ENCODE measurements at regions of chr16 and their contacts with region 1.

Region 1: GRCh38 chr16:85055503-85056210 is 28.1 kb downstream of the KIAA0513 start:
- DNase-seq: peak; percentile 75 to 93
- ATAC-seq: peak; percentile 86 to 97 (median 94)
- H3K4me3 ChIP-seq: peak overlapping the region; percentile 6
- H3K4me3 Mint-ChIP-seq: peak overlapping the region; percentile 78
- H3K27ac ChIP-seq: peak overlapping the region; percentile 85
- H3K27ac Mint-ChIP-seq: peak overlapping the region; percentile 90 to 91
- H3K4me1 ChIP-seq: peaks cover 36% of the 10 kb centered on the region
- H3K4me1 Mint-ChIP-seq: peaks cover 32% of the 10 kb centered on the region in 2 donors
- H3K27me3 ChIP-seq: no peaks in the 10 kb centered on the region
- H3K27me3 Mint-ChIP-seq: peaks cover 2 to 18% of the 10 kb centered on the region in 2 donors
- CTCF ChIP-seq: no peak

Region 2: DNA sequence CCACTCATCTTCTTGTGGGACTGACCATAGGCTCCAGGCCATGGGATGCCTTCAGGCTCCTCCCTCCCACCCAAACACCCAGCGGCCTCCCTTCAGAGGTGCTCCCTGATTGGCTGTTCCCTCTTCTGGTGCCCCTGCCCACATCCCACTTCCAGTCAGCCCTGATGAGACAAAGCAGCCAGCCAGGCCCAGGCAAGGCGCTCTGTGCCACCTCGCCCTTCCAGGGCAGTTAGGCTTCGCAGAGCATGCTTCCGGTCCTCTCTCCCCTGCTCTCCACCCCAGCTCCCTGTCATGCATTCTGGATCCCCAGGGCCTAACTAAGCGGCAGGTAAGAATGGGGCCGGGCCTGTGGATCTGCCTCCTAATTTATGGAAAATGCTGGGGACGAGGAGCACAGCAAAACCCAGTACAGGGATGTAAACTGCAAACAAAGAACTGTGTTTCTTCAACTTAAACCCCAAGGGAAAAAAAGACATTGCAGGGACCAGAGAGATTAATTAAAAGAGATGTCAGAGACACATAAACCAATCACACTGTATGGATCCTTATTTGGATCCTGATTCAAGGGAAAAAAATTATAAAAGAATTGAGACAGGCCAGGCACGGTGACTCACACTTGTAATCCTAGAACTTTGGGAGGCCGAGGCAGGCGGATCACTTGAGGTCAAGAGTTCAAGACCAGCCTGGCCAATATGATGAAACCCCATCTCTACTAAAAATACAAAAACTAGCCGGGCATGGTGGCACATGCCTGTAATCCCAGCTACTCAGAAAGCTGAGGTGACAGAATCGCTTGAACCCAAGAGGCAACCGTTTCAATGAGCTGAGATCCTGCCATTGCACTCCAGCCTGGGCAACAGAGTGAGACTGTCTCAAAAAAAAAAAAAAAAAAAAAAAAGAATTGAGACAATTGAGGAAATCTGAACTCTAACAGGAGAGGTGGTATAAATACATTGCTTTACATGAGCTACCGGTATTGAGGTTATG is 70.3 kb before region 1 on chr16:
- intact Hi-C with region 1: no loop called
- DNase-seq: no peak
- ATAC-seq: no peak
- H3K4me3 ChIP-seq: no peak overlapping the region
- H3K4me3 Mint-ChIP-seq: no peak overlapping the region
- H3K27ac ChIP-seq: no peak overlapping the region
- H3K27ac Mint-ChIP-seq: peak overlapping the region in 1 of 2 donors; percentile 13
- H3K4me1 ChIP-seq: peaks cover 15% of the 10 kb centered on the region
- H3K4me1 Mint-ChIP-seq: peaks cover 8 to 16% of the 10 kb centered on the region in 2 donors
- H3K27me3 ChIP-seq: no peaks in the 10 kb centered on the region
- H3K27me3 Mint-ChIP-seq: no peaks in the 10 kb centered on the region
- CTCF ChIP-seq: no peak

Region 3: DNA sequence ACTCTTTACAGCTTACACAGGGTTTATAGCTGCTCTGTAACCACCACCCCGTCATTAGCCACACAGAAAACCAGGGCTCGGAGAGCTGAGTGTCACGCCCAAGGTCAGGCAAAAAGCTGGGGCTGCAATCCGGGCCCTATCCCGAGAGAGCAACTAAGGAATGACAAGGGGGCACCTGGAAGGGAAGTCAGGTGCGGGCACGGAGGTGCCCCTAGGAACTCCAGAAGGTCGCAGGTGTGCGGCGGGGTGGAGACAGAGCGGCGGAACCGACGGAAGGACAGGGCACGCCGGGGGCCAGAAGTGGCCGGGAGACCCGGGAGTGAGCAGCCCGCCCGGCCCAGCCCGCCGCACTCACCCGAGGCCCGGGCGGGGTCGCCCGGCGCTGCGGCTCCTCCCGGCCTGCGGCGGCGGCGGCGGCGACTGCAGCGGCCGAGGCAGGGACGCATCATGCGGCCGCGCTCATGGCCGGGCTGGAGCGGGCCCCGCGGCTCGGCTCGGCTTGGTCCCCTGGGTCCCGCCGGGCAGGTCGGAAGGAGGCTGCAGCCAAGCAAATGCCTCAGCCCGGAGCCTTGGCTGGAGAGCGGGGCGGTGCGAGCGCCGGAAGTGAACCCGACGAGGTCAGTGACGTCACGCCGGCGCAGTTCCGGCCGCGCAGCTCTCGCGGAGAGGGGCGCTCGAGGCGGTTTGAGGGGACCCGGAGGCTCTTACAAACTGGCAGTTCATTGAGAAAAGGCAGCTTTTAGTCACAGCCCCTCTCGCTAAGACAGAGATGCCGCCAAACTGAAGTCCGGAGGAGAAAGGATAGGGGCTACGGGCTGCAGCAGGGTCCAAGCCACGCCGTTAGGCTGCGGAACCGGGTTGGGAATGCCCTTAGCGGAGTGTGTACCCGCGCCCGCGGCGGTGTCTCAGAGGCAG is 44.5 kb before region 1 on chr16 and contains the start of gene ZDHHC7:
- intact Hi-C with region 1: loop called (anchors 1 kb)
- DNase-seq: peak; percentile 86 to 95
- ATAC-seq: peak; percentile 86 to 93 (median 87)
- H3K4me3 ChIP-seq: peak within 1 kb of the TSS; percentile 78
- H3K4me3 Mint-ChIP-seq: peak within 1 kb of the TSS; percentile 99
- H3K27ac ChIP-seq: peak within 1 kb of the TSS; percentile 93
- H3K27ac Mint-ChIP-seq: peak within 1 kb of the TSS; percentile 100
- H3K4me1 ChIP-seq: peaks cover 19% of the 10 kb centered on the region
- H3K4me1 Mint-ChIP-seq: peaks cover 24 to 41% of the 10 kb centered on the region in 2 donors
- H3K27me3 ChIP-seq: no peaks in the 10 kb centered on the region
- H3K27me3 Mint-ChIP-seq: peaks cover 0 to 4% of the 10 kb centered on the region in 2 donors
- CTCF ChIP-seq: no peak
- total RNA-seq, gene ZDHHC7: 37.9 to 64.9 (median 45.2) TPM

Region 4: GRCh38 chr16:85027349-85027957 is 28.2 kb before region 1 on chr16 and contains the start of gene KIAA0513:
- intact Hi-C with region 1: loop called (anchors 1 kb)
- DNase-seq: peak; percentile 98
- ATAC-seq: peak; percentile 77 to 93 (median 88)
- H3K4me3 ChIP-seq: peak within 1 kb of the TSS; percentile 88
- H3K4me3 Mint-ChIP-seq: peak within 1 kb of the TSS; percentile 90
- H3K27ac ChIP-seq: peak within 1 kb of the TSS; percentile 78
- H3K27ac Mint-ChIP-seq: peak within 1 kb of the TSS; percentile 79 to 97
- H3K4me1 ChIP-seq: peaks cover 29% of the 10 kb centered on the region
- H3K4me1 Mint-ChIP-seq: peaks cover 20 to 33% of the 10 kb centered on the region in 2 donors
- H3K27me3 ChIP-seq: no peaks in the 10 kb centered on the region
- H3K27me3 Mint-ChIP-seq: no peaks in the 10 kb centered on the region
- CTCF ChIP-seq: peak; percentile 9
- total RNA-seq, gene KIAA0513: 7.9 to 17.7 (median 12.1) TPM

Region 5: DNA sequence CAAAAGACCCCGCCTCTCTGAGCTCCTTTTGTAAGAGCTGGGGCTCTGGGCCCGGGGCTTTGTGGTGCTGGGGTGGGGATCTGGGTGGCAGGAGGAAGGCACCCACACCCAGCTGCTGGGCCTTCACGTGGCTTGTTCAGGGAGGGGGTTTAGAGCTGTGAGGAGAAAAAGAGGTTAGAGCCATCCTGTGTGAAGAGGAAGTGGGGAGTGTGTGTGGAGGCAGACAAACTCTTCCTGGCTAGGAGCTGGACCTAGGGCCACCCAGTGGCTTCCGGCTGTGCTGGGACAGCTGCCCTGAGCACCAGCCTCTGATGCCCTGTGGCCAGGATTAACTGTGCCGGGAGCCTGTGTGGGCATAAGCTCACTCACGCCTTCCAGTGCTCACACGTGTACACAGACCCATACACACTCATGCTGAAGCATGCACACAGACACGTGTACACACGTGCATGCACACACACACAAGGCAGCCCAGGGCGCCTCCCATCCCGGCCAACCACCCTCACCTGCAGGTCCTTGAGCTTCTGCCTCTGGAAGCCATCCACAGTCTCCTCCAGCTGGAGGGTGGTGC is 49.2 kb after region 1 on chr16:
- intact Hi-C with region 1: loop called (anchors 1 kb)
- DNase-seq: peak; percentile 58 to 69
- ATAC-seq: peak; percentile 80 to 93 (median 93)
- H3K4me3 ChIP-seq: no peak overlapping the region
- H3K4me3 Mint-ChIP-seq: peak overlapping the region; percentile 81
- H3K27ac ChIP-seq: peak overlapping the region; percentile 48
- H3K27ac Mint-ChIP-seq: peak overlapping the region; percentile 89 to 93
- H3K4me1 ChIP-seq: peaks cover 76% of the 10 kb centered on the region
- H3K4me1 Mint-ChIP-seq: peaks cover 68 to 81% of the 10 kb centered on the region in 2 donors
- H3K27me3 ChIP-seq: no peaks in the 10 kb centered on the region
- H3K27me3 Mint-ChIP-seq: no peaks in the 10 kb centered on the region
- CTCF ChIP-seq: no peak

Measured in natural killer cell (primary cell).